CD4-positive, alpha-beta T cell (primary cell): ENCODE measurements at regions of chr20 and their contacts with region 1.

Region 1: GRCh38 chr20:32789896-32790750 is 27.9 kb downstream of the DNMT3B start:
- DNase-seq: peak; percentile 54 to 83 (median 66)
- ATAC-seq: peak; percentile 66
- H3K4me3 ChIP-seq: no peak overlapping the region
- H3K4me3 Mint-ChIP-seq: no peak overlapping the region
- H3K27ac ChIP-seq: no peak overlapping the region
- H3K27ac Mint-ChIP-seq: peak overlapping the region; percentile 37
- H3K4me1 ChIP-seq: peaks cover 40% of the 10 kb centered on the region
- H3K4me1 Mint-ChIP-seq: peaks cover 44% of the 10 kb centered on the region
- H3K27me3 ChIP-seq: no peaks in the 10 kb centered on the region
- H3K27me3 Mint-ChIP-seq: no peaks in the 10 kb centered on the region
- CTCF ChIP-seq: peak; percentile 98

Region 2: GRCh38 chr20:32830437-32830836 is 40.3 kb after region 1 on chr20:
- CTCF ChIA-PET with region 1: interaction called, 7 read pairs
- POLR2A ChIA-PET with region 1: interaction called, 6 read pairs
- intact Hi-C with region 1: loop called (anchors 5 kb)
- DNase-seq: peak in 3 of 14 experiments; percentile 18 to 61 (median 54)
- ATAC-seq: peak; percentile 44
- H3K4me3 ChIP-seq: no peak overlapping the region
- H3K4me3 Mint-ChIP-seq: peak overlapping the region; percentile 59
- H3K27ac ChIP-seq: peak overlapping the region in 1 of 2 donors; percentile 36
- H3K27ac Mint-ChIP-seq: peak overlapping the region; percentile 77
- H3K4me1 ChIP-seq: peaks cover 34% of the 10 kb centered on the region
- H3K4me1 Mint-ChIP-seq: peaks cover 68% of the 10 kb centered on the region
- H3K27me3 ChIP-seq: no peaks in the 10 kb centered on the region
- H3K27me3 Mint-ChIP-seq: no peaks in the 10 kb centered on the region
- CTCF ChIP-seq: no peak

Region 3: GRCh38 chr20:32894026-32894483 is 103.9 kb after region 1 on chr20:
- CTCF ChIA-PET with region 1: no interaction called
- POLR2A ChIA-PET with region 1: no interaction called
- intact Hi-C with region 1: loop called (anchors 2 to 5 kb)
- DNase-seq: peak in 1 of 14 experiments; percentile 29
- ATAC-seq: no peak
- H3K4me3 ChIP-seq: no peak overlapping the region
- H3K4me3 Mint-ChIP-seq: no peak overlapping the region
- H3K27ac ChIP-seq: no peak overlapping the region
- H3K27ac Mint-ChIP-seq: no peak overlapping the region
- H3K4me1 ChIP-seq: no peaks in the 10 kb centered on the region
- H3K4me1 Mint-ChIP-seq: no peaks in the 10 kb centered on the region
- H3K27me3 ChIP-seq: no peaks in the 10 kb centered on the region
- H3K27me3 Mint-ChIP-seq: no peaks in the 10 kb centered on the region
- CTCF ChIP-seq: no peak

Region 4: DNA sequence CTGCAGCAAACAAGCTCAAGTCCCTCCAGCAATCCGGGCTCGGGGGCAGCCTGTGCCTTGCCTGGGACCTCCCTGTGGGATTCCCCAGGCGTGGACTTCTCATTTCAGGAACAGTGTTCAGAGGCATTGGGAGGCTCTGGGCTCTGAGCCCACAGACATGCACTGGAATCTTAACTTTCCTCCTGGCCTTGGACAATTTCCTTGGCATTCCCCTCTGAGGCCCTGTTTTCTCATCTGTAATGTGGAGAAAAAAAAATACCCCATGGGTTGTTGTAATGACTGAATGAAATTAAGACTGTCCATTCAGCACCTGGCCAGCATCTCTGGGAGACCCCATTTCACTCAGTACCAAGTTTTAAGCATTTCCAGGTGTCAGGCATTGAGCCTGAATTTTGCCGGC is 306.9 kb after region 1 on chr20:
- CTCF ChIA-PET with region 1: no interaction called
- POLR2A ChIA-PET with region 1: no interaction called
- intact Hi-C with region 1: loop called (anchors 1 kb)
- DNase-seq: no peak
- ATAC-seq: no peak
- H3K4me3 ChIP-seq: no peak overlapping the region
- H3K4me3 Mint-ChIP-seq: no peak overlapping the region
- H3K27ac ChIP-seq: no peak overlapping the region
- H3K27ac Mint-ChIP-seq: no peak overlapping the region
- H3K4me1 ChIP-seq: peaks cover 6% of the 10 kb centered on the region
- H3K4me1 Mint-ChIP-seq: peaks cover 11% of the 10 kb centered on the region
- H3K27me3 ChIP-seq: no peaks in the 10 kb centered on the region
- H3K27me3 Mint-ChIP-seq: no peaks in the 10 kb centered on the region
- CTCF ChIP-seq: no peak

Region 5: DNA sequence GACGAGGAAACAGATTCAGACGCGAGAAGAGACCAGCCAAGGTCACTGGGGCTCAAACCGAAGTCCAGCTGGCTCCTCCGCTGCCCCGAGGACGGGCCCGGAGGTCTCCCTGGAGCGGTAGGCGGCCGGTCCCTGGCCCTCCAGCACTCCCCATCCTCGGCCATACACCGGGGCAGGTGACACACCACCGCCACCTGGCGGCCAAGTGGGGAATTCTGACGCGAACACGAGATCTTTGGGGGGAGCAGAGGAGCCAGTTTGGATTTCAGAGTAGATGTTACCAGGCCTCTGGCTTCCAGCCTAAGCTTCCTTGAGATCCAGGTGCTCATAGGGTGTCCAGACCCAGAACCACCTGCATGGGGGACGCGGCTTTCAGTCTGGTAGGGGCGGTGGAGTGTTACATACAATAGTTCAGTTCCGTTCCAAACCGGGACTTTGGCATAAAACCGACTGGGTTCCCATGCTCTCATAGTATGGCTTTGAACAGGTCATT is 509.0 kb after region 1 on chr20:
- CTCF ChIA-PET with region 1: no interaction called
- POLR2A ChIA-PET with region 1: no interaction called
- intact Hi-C with region 1: loop called in 1 of 2 experiments (anchors 2 kb)
- DNase-seq: peak; percentile 49 to 84 (median 70)
- ATAC-seq: peak; percentile 79
- H3K4me3 ChIP-seq: no peak overlapping the region
- H3K4me3 Mint-ChIP-seq: no peak overlapping the region
- H3K27ac ChIP-seq: no peak overlapping the region
- H3K27ac Mint-ChIP-seq: no peak overlapping the region
- H3K4me1 ChIP-seq: peaks cover 6% of the 10 kb centered on the region
- H3K4me1 Mint-ChIP-seq: no peaks in the 10 kb centered on the region
- H3K27me3 ChIP-seq: no peaks in the 10 kb centered on the region
- H3K27me3 Mint-ChIP-seq: no peaks in the 10 kb centered on the region
- CTCF ChIP-seq: peak; percentile 87